HepG2 (cell line): ENCODE measurements at regions of chrX and their contacts with region 1.

Region 1: GRCh38 chrX:51837921-51838320 is 55.5 kb upstream of the MAGED1 start:
- DNase-seq: no peak
- ATAC-seq: no peak
- H3K4me3 ChIP-seq: no peak overlapping the region
- H3K27ac ChIP-seq: no peak overlapping the region
- H3K4me1 ChIP-seq: no peaks in the 10 kb centered on the region
- H3K27me3 ChIP-seq: no peaks in the 10 kb centered on the region
- CTCF ChIP-seq: no peak
- EP300 ChIP-seq: no peak
- POLR2A ChIP-seq: no peak
- RAD21 ChIP-seq: no peak

Region 2: DNA sequence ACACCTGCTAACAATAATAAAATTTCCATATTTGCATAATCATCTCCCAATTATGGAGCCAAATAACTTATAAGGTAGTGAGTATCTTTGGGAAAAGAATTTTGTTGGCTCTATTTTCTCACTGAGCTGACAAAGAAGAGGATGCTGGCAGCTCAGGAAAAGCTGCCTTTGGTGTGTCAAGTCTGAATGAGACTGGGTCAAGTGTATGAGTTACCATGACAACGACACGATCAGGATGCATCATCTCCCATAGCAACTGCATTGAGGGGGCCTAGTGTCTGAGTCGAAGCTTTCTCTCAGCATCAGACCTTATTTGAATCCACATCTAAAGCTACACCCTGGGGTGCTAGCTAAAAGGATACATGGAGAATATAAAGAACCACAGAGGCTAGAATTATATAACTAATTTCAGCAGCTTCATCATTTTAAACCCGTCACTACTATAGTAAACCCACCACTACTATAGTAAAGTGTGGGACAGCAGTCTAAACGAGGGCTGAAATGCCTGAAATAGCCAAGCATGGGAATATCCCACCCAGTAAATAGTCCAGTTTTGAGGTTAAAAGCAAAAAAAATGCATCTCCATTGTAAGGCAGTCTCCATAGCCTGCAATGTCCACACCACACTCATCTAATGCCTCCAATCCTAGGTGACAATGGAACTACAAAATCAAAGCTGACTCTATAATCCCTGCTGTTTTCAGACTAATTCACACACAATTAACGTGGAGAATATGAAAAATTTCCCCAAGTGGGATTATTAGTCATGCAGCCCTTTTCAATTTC is 78.7 kb before region 1 on chrX:
- CTCF ChIA-PET with region 1: no interaction called
- POLR2A ChIA-PET with region 1: no interaction called
- in situ Hi-C with region 1: no loop called
- intact Hi-C with region 1: no loop called
- DNase-seq: no peak
- ATAC-seq: no peak
- H3K4me3 ChIP-seq: no peak overlapping the region
- H3K27ac ChIP-seq: no peak overlapping the region
- H3K4me1 ChIP-seq: no peaks in the 10 kb centered on the region
- H3K27me3 ChIP-seq: no peaks in the 10 kb centered on the region
- CTCF ChIP-seq: no peak
- EP300 ChIP-seq: no peak
- POLR2A ChIP-seq: no peak
- RAD21 ChIP-seq: no peak

Region 3: GRCh38 chrX:51813886-51814460 is 23.9 kb before region 1 on chrX:
- CTCF ChIA-PET with region 1: no interaction called
- POLR2A ChIA-PET with region 1: no interaction called
- in situ Hi-C with region 1: no loop called
- intact Hi-C with region 1: loop called (anchors 1 kb)
- DNase-seq: no peak
- ATAC-seq: no peak
- H3K4me3 ChIP-seq: no peak overlapping the region
- H3K27ac ChIP-seq: no peak overlapping the region
- H3K4me1 ChIP-seq: no peaks in the 10 kb centered on the region
- H3K27me3 ChIP-seq: no peaks in the 10 kb centered on the region
- CTCF ChIP-seq: no peak
- EP300 ChIP-seq: no peak
- POLR2A ChIP-seq: no peak
- RAD21 ChIP-seq: no peak